Psoas muscle (tissue), 8 donors: ENCODE measurements at regions of chr6 and their contacts with region 1.

Region 1: DNA sequence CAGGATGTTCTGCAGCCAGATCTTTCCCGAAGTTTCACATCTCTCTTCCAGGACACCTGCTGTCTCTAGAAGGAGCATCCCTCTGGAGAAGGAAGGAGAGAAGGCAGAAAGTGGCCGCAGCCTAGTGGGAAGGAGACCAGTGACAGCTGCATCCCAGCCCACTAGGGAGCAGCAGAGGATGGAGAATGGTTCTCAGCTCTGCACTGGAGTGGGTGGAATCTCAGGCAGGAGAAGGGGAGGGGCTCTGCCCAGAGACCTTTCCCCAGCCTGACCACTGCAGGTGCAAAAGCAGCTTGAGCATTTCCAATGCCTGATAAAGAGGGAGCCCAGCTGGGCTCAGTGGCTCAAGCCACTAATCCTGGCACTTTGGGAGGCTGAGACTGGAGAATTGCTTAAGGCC is 32.3 kb downstream of the NCR2 start:
- DNase-seq: no peak
- ATAC-seq: peak in 3 of 4 donors; percentile 36 to 49 (median 46)
- H3K4me3 ChIP-seq: no peak overlapping the region
- H3K27ac ChIP-seq: no peak overlapping the region
- H3K4me1 ChIP-seq: peaks cover 2% of the 10 kb centered on the region
- H3K27me3 ChIP-seq: peaks cover 0 to 79% (median 22%) of the 10 kb centered on the region in 3 donors
- CTCF ChIP-seq: peak; percentile 47

Region 2: DNA sequence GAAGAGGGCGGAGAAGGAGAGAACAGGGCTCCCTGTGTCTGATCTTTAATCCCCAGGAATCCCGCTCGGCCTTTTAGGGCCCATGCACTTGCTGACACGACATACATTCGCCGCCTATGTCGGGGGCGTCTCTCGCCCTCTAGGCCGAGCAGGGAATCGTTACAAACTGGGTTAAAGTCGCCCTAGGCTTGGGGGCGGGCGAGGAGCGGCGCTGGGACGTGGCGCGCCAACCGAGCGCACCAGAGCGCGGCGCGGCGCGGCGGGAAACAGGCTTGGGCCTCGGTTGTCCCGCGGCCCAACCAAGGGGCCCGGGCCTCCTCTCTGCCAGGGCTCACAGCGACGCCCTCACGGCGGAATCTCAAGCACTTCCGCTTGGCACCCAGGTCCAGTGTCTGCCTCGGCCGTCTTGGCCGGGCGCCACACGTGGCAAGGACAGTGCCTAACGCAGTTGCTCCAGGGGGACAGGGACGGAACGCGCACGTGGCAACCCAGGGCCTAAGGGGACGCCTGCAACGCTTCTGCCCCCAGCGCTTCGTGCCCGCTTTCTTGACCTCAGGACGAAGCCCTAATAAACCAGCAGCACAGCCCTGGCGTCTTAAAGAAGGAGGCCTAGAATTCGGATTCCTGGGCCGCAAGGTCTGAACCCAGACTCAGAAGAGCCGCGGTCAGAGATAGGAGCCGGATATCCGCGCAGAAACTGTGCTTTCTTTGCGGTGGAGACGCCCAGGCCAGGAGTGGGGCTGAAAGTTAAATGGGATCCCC is 39.2 kb after region 1 on chr6:
- intact Hi-C with region 1: loop called in 1 of 2 experiments (anchors 2 kb)
- DNase-seq: no peak
- ATAC-seq: peak in 3 of 4 donors; percentile 26 to 80 (median 57)
- H3K4me3 ChIP-seq: peak overlapping the region; percentile 25
- H3K27ac ChIP-seq: no peak overlapping the region
- H3K4me1 ChIP-seq: no peaks in the 10 kb centered on the region
- H3K27me3 ChIP-seq: peaks cover 0 to 29% (median 9%) of the 10 kb centered on the region in 3 donors
- CTCF ChIP-seq: no peak

Region 3: GRCh38 chr6:41424370-41425058 is 56.8 kb after region 1 on chr6:
- intact Hi-C with region 1: loop called in 1 of 2 experiments (anchors 5 kb)
- DNase-seq: peak; percentile 74 to 79
- ATAC-seq: peak; percentile 55 to 75 (median 66)
- H3K4me3 ChIP-seq: no peak overlapping the region
- H3K27ac ChIP-seq: no peak overlapping the region
- H3K4me1 ChIP-seq: peaks cover 6% of the 10 kb centered on the region
- H3K27me3 ChIP-seq: peaks cover 0 to 15% (median 0%) of the 10 kb centered on the region in 3 donors
- CTCF ChIP-seq: peak; percentile 83

Region 4: DNA sequence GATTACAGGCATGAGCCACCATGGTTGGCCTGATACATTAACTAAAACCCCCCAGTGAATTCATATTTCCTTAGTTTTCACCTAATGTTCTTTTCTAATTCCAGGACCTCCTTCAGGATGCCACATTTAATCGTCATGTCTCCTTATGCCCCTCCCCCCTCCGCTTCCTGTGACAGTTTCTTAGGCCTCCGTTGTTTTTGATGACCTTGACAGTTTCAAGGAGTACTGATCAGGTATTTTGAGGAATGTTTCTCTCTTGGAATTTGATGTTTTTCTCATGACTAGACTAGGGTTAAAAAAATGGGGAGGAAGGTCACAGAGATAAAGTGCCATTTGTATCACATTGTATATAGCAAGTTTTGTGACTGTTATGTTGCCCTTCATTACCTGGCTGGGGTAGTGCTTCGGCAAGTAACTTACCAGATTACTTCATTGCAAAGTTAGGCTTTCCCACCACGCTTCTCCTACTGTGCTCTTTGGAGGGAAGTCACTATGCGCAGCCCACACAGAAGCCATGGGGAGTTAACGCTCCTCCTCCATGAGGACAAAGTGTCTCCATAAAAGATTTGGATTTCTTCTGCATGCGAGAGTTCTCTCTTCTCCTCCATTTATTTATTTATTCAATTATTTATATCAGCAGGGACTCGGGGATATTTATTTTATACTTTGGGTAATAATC is 67.2 kb after region 1 on chr6:
- intact Hi-C with region 1: no loop called
- DNase-seq: no peak
- ATAC-seq: no peak
- H3K4me3 ChIP-seq: no peak overlapping the region
- H3K27ac ChIP-seq: no peak overlapping the region
- H3K4me1 ChIP-seq: peaks cover 7% of the 10 kb centered on the region
- H3K27me3 ChIP-seq: no peaks in the 10 kb centered on the region
- CTCF ChIP-seq: no peak

Region 5: GRCh38 chr6:41591859-41592502 is 224.3 kb after region 1 on chr6:
- intact Hi-C with region 1: loop called (anchors 1 to 5 kb)
- DNase-seq: peak; percentile 69 to 83
- ATAC-seq: peak; percentile 70 to 91 (median 85)
- H3K4me3 ChIP-seq: no peak overlapping the region
- H3K27ac ChIP-seq: no peak overlapping the region
- H3K4me1 ChIP-seq: no peaks in the 10 kb centered on the region
- H3K27me3 ChIP-seq: no peaks in the 10 kb centered on the region
- CTCF ChIP-seq: peak; percentile 93